ENCODE measurements at regions of chr1 and their contacts with region 1.

Region 1: GRCh38 chr1:28668191-28668955 is at the start of gene GMEB1:
- DNase-seq: peak; percentile 61 to 94 (median 86)

Region 2: GRCh38 chr1:28648474-28649198 is 19.7 kb before region 1 on chr1 and contains the start of gene RNU11:
- intact Hi-C with region 1: loop called (anchors 1 kb)
- DNase-seq: peak; percentile 65 to 95 (median 87)